OCI-LY7 (cell line): ENCODE measurements at regions of chr9 and their contacts with region 1.

Region 1: DNA sequence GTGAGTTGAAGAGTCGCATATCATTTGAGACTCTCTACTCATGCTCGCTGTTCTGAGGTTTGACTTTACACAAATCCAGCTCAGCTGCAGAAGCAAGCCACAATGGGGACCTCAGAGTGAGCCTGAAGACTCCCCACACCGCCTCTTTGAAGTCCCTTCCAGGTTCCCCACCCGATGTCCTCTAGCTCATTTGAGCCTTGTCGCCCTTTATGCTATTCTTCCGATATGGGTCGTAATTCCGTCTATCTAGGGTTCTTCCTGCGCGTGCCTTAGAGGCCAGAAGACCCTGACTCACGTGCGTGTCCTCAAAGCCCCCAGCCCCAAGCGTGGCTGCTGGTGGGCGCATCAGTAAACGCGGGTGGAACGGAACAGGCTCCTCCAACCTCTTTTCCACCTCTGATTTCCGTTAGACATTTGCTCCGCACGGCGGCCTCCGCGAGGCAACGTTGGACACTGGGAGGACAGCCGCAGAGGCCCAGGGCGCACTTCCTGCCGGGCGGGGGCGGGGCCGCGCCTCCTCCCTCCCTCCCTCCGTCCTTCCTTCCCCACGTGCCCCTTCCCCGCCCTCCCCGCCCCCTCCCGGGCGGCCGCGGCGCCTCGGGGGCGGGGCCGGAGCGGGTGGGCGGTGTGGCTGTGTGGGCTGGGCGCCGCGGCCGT is at the start of gene SNX30:
- DNase-seq: peak; percentile 86
- H3K4me3 ChIP-seq: peak within 1 kb of the TSS; percentile 99
- H3K27ac ChIP-seq: peak within 1 kb of the TSS; percentile 29
- H3K4me1 ChIP-seq: peaks cover 35% of the 10 kb centered on the region
- CTCF ChIP-seq: no peak
- total RNA-seq, gene SNX30: 14.2 and 19.8 TPM in 2 replicates

Region 2: DNA sequence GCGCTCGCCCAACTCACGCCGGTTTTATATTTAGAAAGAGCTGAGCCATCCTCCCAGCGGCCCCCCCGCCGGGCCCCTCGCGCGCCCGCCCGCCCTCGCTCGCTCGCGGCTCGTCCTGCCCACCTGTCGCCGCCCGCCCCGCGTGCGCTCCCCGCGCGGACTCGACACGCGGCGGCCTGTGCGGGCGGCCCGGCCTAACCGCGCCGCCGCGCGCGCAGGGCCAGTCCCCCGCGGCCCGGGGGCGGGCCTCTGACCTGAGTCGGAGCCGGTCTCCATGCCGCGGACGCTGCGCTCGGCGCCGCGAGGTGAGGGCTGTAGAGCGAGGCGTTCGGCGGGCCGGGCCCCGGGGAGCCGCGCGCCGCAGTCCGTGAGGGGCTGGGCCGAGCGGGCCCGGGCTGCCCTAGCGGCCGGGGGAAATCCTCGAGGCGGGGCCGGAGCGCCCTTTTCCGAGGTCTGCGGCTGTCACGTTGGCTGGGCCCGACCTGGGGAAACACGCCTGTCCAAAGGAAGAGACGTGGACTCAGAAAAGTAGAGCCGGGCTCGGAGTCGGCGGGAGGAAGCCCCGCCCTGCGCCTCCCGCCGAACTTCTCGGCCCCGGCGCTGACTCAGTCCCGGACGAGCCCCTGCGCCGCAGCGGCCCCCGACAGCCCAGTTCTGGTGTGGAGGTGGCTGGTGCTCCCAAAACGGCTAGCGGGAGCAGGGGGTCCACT is 1266.2 kb before region 1 on chr9 and contains the start of gene ECPAS:
- CTCF ChIA-PET with region 1: interaction called, 5 read pairs
- POLR2A ChIA-PET with region 1: no interaction called
- intact Hi-C with region 1: loop called (anchors 10 kb)
- DNase-seq: peak; percentile 79
- H3K4me3 ChIP-seq: peak within 1 kb of the TSS; percentile 99
- H3K27ac ChIP-seq: peak within 1 kb of the TSS; percentile 72
- H3K4me1 ChIP-seq: peaks cover 9% of the 10 kb centered on the region
- CTCF ChIP-seq: no peak
- total RNA-seq, gene ECPAS: 41.0 and 47.3 TPM in 2 replicates

Region 3: DNA sequence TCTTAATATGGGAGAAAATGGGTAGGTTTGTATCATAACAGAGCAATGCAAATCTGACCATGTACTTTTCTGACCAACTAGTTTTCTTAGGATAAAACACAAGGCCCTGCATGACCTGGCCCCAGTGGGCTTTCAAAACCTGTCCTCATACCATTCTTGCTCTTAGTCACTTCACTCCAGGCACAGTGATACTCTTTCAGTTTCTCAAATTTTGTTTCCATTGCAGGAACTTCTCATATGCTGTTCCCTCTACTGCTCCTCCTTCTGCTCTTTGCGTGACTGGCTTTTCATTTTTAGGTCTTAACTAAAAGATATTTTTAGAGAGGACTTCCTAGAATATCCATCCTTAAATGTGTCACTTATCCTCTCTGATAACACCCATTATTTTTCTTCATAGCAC is 144.7 kb before region 1 on chr9:
- CTCF ChIA-PET with region 1: no interaction called
- POLR2A ChIA-PET with region 1: no interaction called
- intact Hi-C with region 1: no loop called
- DNase-seq: no peak
- H3K4me3 ChIP-seq: no peak overlapping the region
- H3K27ac ChIP-seq: no peak overlapping the region
- H3K4me1 ChIP-seq: no peaks in the 10 kb centered on the region
- CTCF ChIP-seq: no peak

Region 4: DNA sequence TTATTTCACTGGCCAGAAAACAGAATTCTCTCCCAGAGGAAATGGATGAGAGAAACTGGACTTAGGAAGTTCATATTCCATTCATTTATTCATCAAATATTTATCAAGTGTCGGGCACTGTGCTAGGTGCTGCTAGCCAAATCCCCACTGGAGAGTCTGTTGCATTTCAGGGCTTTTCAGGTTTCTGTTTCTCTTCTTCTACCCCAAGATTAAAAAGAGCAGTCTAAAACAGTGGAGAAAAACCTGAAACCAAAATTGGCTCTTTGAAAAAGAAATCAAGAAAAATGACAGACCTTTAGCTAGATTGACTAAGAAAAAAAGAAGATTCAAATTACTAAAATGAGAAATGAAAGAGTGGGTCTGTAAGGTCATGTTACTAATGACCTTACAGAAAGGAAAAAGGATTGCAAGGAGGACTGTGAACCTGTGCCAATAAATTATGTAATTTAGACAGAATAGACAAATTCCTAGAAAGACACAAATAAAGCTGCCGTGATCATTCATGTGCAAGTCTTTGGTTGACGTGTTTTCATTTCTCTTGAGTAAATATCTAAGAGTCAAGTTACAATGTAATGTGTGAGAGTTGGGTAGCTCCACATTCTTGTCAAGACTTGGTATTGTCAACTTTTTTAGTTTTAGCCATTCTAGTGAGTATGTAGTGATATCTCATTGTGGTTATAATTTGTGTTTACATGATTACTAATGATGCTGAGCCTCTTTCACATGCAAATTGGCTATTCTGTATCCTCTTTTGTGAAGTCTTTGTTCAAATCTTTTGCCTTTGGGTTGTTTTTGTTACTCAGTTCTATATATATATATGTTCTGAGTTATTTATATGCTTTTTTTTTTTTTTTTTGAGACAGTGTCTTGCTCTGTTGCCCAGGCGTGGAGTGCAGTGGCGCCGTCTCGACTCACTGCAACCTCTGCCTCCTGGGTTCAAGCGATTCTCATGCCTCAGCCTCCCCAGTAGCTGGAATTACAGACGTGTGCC is 24.1 kb after region 1 on chr9:
- CTCF ChIA-PET with region 1: no interaction called
- POLR2A ChIA-PET with region 1: no interaction called
- intact Hi-C with region 1: loop called (anchors 2 kb)
- DNase-seq: peak; percentile 14
- H3K4me3 ChIP-seq: no peak overlapping the region
- H3K27ac ChIP-seq: no peak overlapping the region
- H3K4me1 ChIP-seq: peaks cover 20% of the 10 kb centered on the region
- CTCF ChIP-seq: no peak

Region 5: DNA sequence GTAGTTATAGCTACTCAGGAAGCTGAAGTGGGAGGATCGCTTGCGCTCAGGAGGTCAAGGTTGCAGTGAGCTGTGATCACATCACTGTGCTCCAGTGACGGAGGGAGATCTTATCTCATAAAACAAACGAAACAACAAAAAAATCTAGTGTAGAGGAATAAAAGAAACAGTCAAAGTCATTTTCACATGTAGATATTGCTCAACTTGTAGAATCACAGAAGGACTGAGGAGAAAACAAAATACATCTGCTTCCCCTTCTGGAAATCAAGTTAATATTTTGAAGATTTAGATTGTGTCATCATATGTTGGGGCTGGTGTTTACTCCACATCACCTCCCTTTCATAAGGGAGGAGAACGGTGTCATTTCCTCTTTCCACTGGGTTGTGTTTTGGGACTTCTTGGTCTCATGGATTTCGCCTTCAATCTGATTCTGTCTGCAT is 148.7 kb after region 1 on chr9:
- CTCF ChIA-PET with region 1: no interaction called
- POLR2A ChIA-PET with region 1: no interaction called
- intact Hi-C with region 1: no loop called
- DNase-seq: no peak
- H3K4me3 ChIP-seq: no peak overlapping the region
- H3K27ac ChIP-seq: no peak overlapping the region
- H3K4me1 ChIP-seq: peaks cover 6% of the 10 kb centered on the region
- CTCF ChIP-seq: no peak